AG04450 (cell line): ENCODE measurements at regions of chr1 and their contacts with region 1.

Region 1: DNA sequence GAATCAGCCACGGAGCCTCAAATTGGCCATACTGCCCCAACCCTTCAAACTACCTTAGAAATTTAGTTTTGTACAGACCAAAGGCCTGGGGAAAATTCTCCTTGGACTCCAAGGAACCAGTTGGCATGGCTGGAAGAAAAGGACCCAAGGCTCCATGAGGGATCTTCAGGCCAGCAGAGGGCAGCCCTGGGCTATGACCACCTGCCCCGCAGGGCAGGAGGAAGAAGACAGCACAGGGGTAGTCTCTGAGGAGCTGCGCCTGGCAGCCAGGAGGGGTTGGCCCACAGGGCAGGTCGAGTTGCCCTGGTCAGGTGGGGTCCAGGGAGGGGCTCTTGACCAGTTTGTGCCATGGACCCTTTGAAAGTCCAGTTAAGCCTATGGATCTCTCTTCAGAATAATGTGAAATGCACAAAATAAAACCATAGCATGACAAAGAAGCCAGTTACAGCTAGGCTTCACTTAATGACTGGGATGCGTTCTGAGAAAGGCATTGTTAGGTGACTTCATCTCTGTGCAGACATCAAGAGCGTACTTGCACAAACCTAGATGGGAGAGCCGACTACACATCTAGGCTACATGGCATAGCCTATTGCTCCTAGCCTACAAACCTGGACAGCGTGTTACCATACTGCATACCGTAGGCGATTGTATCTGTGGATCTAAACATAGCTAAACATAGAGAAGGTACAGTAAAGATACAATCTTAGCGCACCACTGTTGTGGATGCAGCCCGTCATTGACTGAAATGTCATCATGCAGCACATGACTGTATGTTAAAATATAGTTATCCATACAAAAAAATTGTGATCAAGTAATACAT is 26.1 kb downstream of the CACNA1S start:
- DNase-seq: no peak
- H3K4me3 ChIP-seq: no peak overlapping the region
- H3K27ac ChIP-seq: no peak overlapping the region
- H3K27me3 ChIP-seq: peaks cover 52% of the 10 kb centered on the region
- CTCF ChIP-seq: peak; percentile 71

Region 2: DNA sequence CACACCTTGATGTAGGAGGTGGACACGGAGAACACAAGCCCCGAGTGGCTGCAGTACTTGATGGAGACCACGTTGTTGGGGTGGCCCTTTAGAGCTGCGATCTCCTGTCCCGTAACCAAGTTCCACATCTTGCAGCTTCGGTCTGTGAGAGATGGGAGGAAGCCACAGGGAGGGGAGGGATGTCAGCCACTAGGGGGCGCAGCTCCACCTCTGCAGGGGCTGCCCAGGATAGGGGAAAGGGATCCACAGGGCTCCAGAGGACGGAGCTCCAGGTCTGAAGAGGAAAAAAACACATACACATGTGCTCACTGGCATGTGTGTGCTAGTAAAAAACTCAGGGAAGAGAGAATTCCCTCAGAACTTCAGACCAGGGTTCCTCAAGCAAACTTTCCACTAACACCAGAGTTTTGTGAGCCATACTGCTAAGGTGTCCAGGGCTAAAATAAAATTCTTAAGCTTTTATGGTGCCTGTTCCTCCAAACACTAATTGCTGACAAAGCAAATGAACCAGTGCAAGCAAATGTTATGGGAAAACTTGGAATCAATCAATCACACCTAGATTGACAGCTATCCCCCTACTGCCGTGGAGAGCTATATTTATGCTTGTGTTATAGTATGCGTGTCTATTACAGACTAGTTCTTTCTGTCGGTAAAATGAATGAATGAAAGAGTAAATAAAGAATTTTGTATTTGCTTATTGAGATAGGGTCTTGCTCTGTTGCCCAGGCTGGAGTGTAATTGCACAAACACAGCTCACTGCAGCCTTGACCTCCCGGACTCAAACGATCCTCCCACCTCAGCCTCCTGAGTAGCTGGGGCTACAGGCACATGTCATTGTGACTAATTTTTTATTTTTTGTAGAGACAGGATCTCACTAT is 106.3 kb before region 1 on chr1:
- CTCF ChIA-PET with region 1: no interaction called
- POLR2A ChIA-PET with region 1: no interaction called
- DNase-seq: no peak
- H3K4me3 ChIP-seq: no peak overlapping the region
- H3K27ac ChIP-seq: no peak overlapping the region
- H3K27me3 ChIP-seq: no peaks in the 10 kb centered on the region
- CTCF ChIP-seq: peak; percentile 46; the same call in 1 of the 2 replicates

Region 3: DNA sequence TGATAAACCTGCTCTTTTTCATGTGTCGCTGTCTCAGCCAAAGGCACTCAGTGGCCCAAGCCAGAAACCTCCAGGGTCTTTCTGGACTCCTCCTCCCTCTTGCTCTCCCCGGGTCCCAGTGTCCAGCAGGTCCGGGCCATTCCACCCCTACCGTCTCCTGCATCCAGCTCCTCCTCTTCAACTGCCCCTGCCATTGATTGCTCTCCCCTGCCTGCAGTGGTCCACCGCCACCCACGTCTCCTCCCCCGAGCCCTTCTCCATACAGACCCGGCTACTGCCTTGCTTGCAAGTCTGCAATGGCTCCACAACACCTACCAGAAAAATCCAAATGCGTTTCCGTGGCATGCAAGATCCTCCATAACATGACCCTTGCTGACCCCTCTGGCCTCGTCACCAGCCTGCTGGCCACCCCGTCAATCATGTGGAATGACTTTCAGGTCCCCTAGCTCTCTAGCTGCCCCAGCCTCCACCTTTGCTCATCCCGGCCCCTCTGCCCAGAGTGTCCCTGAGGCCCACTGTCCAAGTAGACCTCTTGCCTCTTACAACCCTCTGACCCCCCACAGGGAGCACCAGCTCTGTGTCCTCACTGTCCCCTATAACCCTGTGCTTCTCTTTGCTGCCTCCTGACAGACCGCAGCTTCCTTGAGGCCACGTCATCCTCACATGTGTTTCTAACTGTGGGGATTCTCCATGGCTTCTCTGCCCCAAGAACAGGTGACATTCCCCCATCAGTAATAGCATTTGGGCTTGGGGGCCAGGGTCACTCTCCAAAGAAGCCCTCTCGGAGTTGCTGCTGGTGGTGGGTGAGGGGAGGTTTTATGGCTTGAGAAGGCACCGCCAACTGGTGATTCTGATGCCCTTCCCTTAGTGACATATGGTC is 11.1 kb after region 1 on chr1:
- CTCF ChIA-PET with region 1: interaction called, 10 read pairs
- POLR2A ChIA-PET with region 1: no interaction called
- DNase-seq: no peak
- H3K4me3 ChIP-seq: no peak overlapping the region
- H3K27ac ChIP-seq: no peak overlapping the region
- H3K27me3 ChIP-seq: peaks cover 64% of the 10 kb centered on the region
- CTCF ChIP-seq: no peak

Region 4: DNA sequence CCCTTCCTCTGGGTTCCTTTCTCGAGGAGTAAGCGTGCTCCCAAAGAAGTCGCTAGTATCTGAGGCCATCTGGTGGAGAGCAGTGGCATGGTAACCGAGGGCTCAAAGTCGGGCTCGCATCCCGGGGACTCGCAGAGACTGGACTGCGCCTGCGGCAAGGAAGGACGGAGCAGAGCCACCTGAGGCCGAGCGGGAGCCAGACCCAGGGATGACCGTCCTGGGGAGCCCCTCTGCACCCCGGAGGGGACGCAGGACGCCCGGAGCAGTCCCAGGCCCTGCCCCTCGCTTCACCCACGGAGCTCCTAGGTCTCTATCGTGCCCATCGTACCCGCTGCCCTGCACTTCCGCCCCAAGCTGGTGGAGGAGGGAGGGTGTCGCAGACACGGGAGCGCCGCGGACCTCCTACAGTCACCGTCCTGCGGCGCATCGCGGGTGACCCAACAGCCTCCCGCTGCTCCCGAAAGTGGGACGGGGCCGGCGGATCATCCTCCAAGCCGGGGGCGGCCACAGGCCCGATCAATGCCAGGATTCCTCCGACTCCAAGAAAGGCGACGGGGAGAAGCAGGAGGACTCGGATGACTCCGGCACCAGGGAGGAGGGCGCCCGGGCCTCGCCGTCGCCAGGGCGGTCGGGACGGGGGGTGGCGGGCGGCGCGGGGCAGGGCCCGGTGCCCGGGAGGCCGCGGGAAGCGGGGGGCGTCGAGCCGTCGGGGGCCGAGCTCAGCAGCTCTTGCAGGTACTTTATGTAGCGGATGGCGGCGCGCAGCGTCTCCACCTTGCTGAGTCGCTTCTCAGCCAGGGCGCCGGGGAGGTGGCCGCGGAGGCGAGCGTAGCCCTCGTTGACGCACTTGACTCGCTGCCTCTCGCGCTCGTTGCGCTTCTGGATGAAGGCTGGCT is 28.4 kb after region 1 on chr1:
- CTCF ChIA-PET with region 1: interaction called, 53 read pairs
- POLR2A ChIA-PET with region 1: no interaction called
- DNase-seq: peak; percentile 61
- H3K4me3 ChIP-seq: peak overlapping the region; percentile 66
- H3K27ac ChIP-seq: no peak overlapping the region
- H3K27me3 ChIP-seq: peaks cover 48% of the 10 kb centered on the region
- CTCF ChIP-seq: peak; percentile 90

Region 5: GRCh38 chr1:201119206-201120197 is 33.4 kb after region 1 on chr1:
- CTCF ChIA-PET with region 1: interaction called, 53 read pairs
- POLR2A ChIA-PET with region 1: no interaction called
- DNase-seq: no peak
- H3K4me3 ChIP-seq: no peak overlapping the region
- H3K27ac ChIP-seq: no peak overlapping the region
- H3K27me3 ChIP-seq: peaks cover 61% of the 10 kb centered on the region
- CTCF ChIP-seq: peak; percentile 58